ENCODE measurements at regions of chr5 and their contacts with region 1.

Region 1: DNA sequence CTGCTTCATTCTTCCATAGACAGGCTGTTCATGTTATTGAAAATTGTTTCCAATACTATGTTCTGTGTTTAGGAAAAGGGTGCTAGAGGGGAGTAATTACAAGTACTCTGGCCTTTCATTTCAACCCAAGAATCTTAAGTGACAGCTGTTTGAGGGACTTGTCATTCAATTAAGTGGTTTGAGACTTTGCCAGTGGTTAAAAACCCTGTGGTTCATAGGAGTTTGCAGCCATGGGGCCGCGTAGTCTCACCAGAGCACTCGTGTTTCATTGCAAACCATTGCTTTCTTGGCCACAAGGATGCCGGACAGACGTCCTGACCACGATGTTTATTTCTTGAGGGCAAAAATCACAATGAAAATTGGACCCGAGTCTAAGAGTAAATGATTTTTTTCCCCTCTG is 248.8 kb downstream of the NNT start:
- DNase-seq: no peak
- H3K4me3 ChIP-seq: no peak overlapping the region
- H3K27ac ChIP-seq: no peak overlapping the region
- H3K4me1 ChIP-seq: no peaks in the 10 kb centered on the region
- H3K27me3 ChIP-seq: no peaks in the 10 kb centered on the region
- CTCF ChIP-seq: no peak
- EP300 ChIP-seq: no peak
- POLR2A ChIP-seq: no peak

Region 2: DNA sequence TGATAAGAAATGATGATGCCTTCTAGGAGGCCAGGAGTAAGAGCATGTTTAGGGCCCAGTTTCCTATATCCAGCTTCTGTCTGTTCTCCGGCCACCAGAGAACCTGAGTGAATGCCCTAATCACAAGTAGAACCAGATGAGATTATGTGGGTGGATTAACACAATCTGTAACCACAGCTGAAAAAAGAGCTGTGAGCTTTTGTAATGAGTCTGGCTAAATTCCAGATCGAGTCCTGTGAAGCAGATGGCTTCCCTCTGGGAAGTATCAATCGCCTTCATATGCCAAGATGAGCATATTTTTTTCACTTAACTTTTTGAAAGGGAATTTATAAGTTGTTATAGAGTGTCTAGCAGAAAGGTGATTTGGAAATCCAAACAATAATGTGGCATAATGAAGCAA is 148.9 kb before region 1 on chr5:
- intact Hi-C with region 1: no loop called
- DNase-seq: no peak
- H3K4me3 ChIP-seq: no peak overlapping the region
- H3K27ac ChIP-seq: no peak overlapping the region
- H3K4me1 ChIP-seq: no peaks in the 10 kb centered on the region
- H3K27me3 ChIP-seq: no peaks in the 10 kb centered on the region
- CTCF ChIP-seq: no peak
- EP300 ChIP-seq: no peak
- POLR2A ChIP-seq: no peak

Region 3: GRCh38 chr5:43873763-43874162 is 22.0 kb after region 1 on chr5:
- intact Hi-C with region 1: loop called in 1 of 4 experiments (anchors 2 kb)
- DNase-seq: no peak
- H3K4me3 ChIP-seq: no peak overlapping the region
- H3K27ac ChIP-seq: no peak overlapping the region
- H3K4me1 ChIP-seq: no peaks in the 10 kb centered on the region
- H3K27me3 ChIP-seq: no peaks in the 10 kb centered on the region
- CTCF ChIP-seq: no peak
- EP300 ChIP-seq: no peak
- POLR2A ChIP-seq: no peak

Measured in ovary (tissue), 10 donors.